ENCODE measurements at regions of chr11 and their contacts with region 1.

Region 1: GRCh38 chr11:122505304-122506006 is 150.1 kb upstream of the UBASH3B start:
- DNase-seq: peak; percentile 67
- H3K4me3 ChIP-seq: no peak overlapping the region
- H3K27ac ChIP-seq: no peak overlapping the region
- H3K4me1 ChIP-seq: no peaks in the 10 kb centered on the region
- H3K27me3 ChIP-seq: no peaks in the 10 kb centered on the region
- CTCF ChIP-seq: peak; percentile 36 to 86 (median 84)
- POLR2A ChIP-seq: no peak

Region 2: DNA sequence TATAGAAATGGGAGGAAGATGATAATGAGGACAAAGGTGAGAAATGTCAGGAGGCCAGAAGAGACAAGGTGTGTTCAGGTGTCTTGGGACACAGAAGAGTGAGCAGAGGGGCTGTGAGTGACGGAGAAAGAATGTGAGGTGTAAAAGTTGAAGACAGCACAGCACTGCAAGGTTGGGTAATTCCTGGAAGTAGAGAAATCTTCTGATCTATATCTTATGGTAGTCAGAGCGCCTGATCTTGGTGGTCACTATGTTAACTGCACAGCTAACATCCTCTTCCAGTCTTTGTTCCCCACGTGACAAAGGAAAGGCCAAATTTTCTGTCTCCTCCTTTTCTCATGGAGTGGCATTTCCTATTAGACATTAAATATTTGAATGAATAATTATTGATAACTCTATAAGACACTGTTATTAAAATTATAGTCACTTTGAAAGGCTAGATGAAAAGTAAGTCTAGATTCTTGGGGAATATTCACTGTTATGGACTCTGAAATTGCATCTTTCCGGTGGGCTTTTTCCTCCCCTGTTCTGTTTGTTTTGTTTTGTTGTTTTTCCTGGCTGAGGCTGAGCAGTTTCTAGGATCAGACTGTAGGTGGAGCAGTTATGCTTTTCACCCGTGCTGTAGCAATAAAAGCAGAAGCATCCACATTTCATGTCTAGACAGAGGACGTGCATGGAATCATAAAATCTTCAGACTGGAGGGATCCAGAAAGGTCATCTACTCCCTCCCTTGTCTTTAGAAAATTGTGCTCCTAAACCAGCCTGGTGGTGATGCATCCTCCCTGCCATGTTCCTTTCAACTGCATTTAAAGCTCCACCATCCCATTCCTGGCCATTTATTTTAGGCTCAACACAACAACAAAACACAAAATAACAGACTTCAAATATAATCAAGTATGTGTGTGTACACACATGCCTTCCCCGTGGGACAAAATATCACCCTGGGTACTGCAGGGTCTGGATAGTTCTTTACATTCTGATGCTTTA is 1186.3 kb before region 1 on chr11:
- intact Hi-C with region 1: loop called (anchors 10 kb)
- DNase-seq: peak; percentile 47
- H3K4me3 ChIP-seq: no peak overlapping the region
- H3K27ac ChIP-seq: no peak overlapping the region
- H3K4me1 ChIP-seq: no peaks in the 10 kb centered on the region
- H3K27me3 ChIP-seq: no peaks in the 10 kb centered on the region
- CTCF ChIP-seq: peak; percentile 55 to 88 (median 74)
- POLR2A ChIP-seq: no peak

Region 3: DNA sequence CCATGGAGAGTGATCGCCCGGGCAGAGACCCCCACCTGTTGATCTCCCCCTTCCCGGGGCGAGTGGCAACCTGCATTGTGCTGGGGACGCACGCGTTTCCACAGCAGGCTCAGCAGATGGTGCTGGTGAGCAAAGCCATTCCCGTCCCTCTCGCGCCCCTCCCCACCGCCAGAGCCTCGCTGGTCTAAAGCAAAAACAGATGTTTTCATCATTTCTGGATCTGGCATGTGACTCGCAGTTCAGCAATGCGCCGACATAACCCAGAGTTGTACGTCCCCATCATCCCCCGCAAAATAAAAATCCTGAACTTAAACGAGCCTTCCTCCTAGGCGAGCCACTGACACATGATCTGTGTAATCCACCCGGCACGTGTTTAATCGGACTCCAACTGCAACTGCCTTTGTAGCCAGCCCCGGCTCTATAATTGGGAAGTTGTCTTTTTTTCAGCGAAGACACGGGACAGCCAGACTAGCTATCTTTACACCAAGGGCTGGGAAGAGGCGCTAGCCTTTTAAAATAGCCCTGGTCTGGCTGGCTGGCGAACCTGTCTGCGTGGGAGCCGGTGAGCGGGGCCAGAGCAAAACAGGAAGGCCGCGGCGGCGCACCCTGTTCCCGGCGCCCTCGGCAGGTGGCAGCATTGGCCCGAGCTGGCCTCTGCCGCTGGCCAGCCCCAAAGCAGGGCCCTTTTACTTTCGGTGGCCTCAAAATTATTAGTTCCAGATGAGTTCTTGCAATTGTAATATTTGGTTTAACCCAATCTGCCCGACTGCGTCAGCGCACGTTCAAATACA is 849.7 kb before region 1 on chr11:
- intact Hi-C with region 1: loop called (anchors 2 kb)
- DNase-seq: peak; percentile 81
- H3K4me3 ChIP-seq: peak overlapping the region; percentile 26 to 31
- H3K27ac ChIP-seq: peak overlapping the region; percentile 80 to 84
- H3K4me1 ChIP-seq: no peaks in the 10 kb centered on the region
- H3K27me3 ChIP-seq: no peaks in the 10 kb centered on the region
- CTCF ChIP-seq: peak; percentile 74 to 95 (median 83)
- POLR2A ChIP-seq: no peak

Region 4: DNA sequence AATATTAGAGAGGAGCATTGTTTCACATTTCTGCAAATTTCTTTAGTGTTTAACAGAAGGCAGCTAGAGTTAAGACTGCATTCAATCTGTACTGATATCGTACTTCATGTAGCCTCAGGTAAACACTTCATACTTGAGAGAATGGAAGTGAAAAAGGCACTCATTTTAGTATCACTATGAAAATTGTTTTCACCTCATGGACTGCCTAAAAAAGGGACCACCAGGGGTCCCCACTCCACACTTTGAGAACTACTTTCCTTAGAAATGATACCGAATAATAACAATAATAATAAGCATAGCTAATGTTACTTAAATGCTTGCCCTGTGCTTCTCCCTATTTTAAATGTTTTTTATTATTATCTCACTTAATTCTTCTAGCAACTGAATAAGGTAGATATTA is 484.6 kb before region 1 on chr11:
- intact Hi-C with region 1: loop called (anchors 10 kb)
- DNase-seq: no peak
- H3K4me3 ChIP-seq: no peak overlapping the region
- H3K27ac ChIP-seq: no peak overlapping the region
- H3K4me1 ChIP-seq: no peaks in the 10 kb centered on the region
- H3K27me3 ChIP-seq: no peaks in the 10 kb centered on the region
- CTCF ChIP-seq: peak in 2 of 4 experiments; percentile 10 to 23
- POLR2A ChIP-seq: no peak

Region 5: DNA sequence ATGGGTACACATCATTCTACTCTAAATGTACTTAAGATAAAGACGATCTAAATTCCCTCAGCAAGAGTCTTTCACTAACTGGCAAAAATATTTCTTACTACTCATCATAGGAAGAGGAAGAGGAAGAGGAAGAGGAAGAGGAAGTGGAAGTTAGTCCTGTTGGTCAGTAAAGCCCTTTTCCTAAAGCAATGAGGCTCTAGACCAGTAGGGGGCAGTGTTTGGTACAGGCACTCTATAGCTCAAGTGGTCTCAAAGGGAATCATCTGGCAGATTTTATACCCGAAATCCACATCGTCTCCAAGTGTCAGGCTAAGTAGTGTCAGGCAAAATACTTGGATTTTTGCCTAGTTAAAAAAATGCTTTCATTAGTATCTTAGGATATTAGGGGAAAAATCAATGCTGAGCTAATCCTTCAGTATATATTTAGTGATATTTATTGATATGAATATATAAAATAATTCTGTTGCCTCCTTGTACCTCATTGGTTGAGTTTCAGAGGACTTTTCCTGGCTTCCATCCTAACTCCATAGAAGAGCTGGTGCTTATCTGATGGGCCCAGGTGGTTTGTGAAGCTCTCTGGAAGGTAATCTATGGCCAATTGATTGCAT is 397.2 kb before region 1 on chr11:
- intact Hi-C with region 1: loop called (anchors 10 kb)
- DNase-seq: no peak
- H3K4me3 ChIP-seq: no peak overlapping the region
- H3K27ac ChIP-seq: no peak overlapping the region
- H3K4me1 ChIP-seq: no peaks in the 10 kb centered on the region
- H3K27me3 ChIP-seq: no peaks in the 10 kb centered on the region
- CTCF ChIP-seq: peak in 3 of 4 experiments; percentile 26 to 51 (median 34)
- POLR2A ChIP-seq: no peak

Region 6: DNA sequence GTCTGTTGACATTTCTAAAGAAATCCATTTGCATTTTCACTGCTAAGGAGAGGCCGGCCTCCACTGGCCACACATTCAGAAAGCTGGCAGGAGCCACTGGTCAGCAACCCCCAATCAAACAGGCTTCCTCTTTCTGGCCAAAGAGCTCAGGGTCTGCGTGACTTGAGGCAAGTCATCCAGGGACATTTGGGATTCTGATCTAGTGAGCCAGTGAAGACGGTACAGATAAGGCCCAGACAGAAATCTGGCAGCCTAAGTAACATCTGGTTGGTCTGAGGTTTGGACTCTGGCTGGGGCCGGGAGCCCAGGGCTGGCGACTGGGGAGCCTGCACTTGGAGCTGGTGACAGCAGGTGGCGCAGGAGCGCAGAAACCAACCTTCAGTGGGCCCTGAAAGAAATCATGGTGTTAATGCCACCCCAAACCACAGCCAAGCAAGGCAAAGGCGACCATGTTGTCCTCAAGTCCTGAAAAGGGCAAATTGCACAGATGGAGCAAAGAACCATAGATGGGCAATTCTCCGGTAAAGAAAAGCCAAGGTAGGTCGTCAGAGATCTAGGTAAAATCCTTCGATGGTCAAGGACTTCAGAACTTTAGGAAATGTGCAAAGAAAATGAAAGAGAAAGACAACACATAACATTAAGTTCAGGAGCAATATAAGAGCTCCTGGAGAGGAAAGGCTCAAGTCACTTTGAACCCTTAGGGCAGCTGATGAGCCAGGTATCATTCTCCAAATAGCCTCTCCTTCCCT is 290.0 kb before region 1 on chr11:
- intact Hi-C with region 1: loop called (anchors 5 kb)
- DNase-seq: peak; percentile 40
- H3K4me3 ChIP-seq: no peak overlapping the region
- H3K27ac ChIP-seq: peak overlapping the region in 1 of 2 donors; percentile 34
- H3K4me1 ChIP-seq: no peaks in the 10 kb centered on the region
- H3K27me3 ChIP-seq: no peaks in the 10 kb centered on the region
- CTCF ChIP-seq: peak; percentile 45 to 81 (median 73)
- POLR2A ChIP-seq: no peak

Region 7: GRCh38 chr11:122293296-122294023 is 212.0 kb before region 1 on chr11:
- intact Hi-C with region 1: loop called (anchors 5 kb)
- DNase-seq: no peak
- H3K4me3 ChIP-seq: no peak overlapping the region
- H3K27ac ChIP-seq: no peak overlapping the region
- H3K4me1 ChIP-seq: no peaks in the 10 kb centered on the region
- H3K27me3 ChIP-seq: no peaks in the 10 kb centered on the region
- CTCF ChIP-seq: peak in 1 of 4 experiments; percentile 15
- POLR2A ChIP-seq: no peak

Measured in prostate gland (tissue), 2 donors.